ENCODE measurements at regions of chr12 and their contacts with region 1.

Region 1: DNA sequence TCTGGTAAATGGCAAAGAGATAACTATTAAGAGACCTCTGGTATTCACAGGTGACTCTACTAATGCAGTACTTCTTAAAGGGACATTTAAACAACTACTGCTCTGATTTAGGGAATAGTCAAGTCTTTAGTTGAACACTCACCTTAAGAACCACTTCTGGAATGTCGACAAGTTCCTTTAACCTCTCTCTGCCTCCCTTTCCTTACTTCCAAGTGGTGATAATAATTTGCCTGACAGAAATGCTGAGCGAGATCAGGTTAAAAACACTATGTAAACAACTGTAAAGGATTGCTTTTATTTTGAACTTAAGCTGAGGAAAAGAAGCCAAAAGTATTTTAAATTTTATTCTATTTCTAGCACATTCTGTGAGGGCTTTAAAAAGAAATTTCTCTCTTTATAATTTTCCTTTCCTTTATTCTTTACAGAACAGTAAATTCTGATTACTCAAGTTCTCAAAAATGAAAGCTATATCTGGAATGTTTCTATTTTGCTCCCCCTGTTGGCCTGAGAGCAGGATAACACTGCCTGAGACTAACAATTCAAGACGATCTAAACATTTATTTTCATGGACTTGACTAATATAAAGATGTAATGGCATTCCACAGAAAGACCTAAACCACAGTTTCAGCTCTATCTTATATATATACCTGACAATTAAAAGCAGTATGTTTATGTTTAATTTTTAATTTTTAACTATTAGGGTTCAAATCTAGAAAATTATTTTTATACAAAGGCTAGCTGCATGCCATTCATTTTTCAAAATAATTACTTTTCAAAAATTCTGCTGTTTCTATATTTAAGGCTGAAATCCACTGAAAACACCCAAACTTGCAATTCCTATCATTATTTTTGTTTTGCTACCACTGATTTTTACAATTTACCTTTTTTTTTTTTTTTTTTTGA is 29.2 kb downstream of the ZCCHC8 start:
- DNase-seq: peak; percentile 80
- H3K4me3 ChIP-seq: no peak overlapping the region
- H3K27ac ChIP-seq: peak overlapping the region; percentile 35
- H3K4me1 ChIP-seq: peaks cover 3% of the 10 kb centered on the region
- H3K27me3 ChIP-seq: no peaks in the 10 kb centered on the region
- CTCF ChIP-seq: peak; percentile 46 to 62
- POLR2A ChIP-seq: no peak

Region 2: DNA sequence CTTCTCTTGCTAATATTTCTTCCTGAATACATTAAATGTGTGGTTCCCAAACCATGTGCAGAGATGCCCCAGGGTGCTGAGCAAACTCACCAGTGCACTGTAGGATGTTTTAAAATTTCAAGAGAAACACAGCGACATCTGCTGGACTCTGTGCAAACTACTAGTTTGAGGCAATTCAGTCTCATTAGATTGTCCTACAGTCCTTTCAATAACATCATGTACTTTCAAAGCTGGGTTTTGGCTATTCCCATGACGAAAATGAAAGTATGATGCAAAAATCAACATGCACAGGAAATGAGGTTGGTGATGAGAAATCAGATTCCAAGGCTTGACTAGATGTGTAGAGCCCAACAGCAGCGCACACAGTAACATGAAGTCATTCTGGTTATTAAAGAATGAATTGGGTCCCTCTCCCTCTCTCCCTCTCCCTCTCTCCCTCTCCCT is 115.4 kb before region 1 on chr12:
- CTCF ChIA-PET with region 1: interaction called, 14 read pairs
- POLR2A ChIA-PET with region 1: no interaction called
- dilution Hi-C with region 1: no loop called
- intact Hi-C with region 1: no loop called
- DNase-seq: peak; percentile 69
- H3K4me3 ChIP-seq: no peak overlapping the region
- H3K27ac ChIP-seq: no peak overlapping the region
- H3K4me1 ChIP-seq: no peaks in the 10 kb centered on the region
- H3K27me3 ChIP-seq: no peaks in the 10 kb centered on the region
- CTCF ChIP-seq: peak; percentile 67 to 74
- POLR2A ChIP-seq: no peak

Region 3: DNA sequence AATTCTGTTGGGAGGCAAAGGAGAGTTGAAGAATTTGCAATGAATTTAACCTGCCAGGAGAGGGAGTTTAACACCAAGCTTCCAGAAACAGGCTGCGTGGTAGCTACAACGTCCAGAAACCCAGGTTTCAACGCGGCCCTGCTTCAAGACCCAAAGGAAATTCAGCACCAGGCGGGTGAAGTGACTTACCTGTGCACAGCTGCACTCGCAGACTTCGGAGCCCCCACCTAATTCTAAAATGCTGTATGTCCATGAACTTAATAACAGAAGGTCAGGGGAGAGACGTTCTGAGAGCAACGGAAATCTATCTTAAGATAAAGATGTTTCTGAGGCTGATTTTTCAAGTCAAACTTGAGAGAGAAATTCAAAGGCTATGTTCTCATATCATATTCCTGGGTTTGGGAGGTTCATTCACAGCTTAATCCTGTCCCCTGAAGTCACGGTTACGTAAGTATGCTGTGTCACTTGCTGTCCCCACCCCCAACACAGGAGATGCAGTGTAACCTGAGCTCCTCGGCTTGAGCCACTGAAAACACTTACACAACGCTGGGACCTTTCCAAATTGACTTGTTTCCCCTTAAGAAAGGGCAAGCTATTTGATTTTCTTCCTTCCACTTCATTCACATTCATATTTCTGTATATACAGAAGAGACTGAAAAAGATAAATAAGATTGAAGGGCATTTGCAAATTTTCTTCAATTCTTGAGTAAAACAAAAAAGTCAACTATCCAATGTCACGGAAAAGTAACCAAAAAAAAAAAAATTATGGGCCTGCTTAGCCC is 71.8 kb before region 1 on chr12:
- CTCF ChIA-PET with region 1: interaction called, 428 read pairs
- POLR2A ChIA-PET with region 1: interaction called, 18 read pairs
- dilution Hi-C with region 1: no loop called
- intact Hi-C with region 1: loop called (anchors 1 kb)
- DNase-seq: peak; percentile 82
- H3K4me3 ChIP-seq: peak overlapping the region in 1 of 3 experiments; percentile 20
- H3K27ac ChIP-seq: peak overlapping the region; percentile 94
- H3K4me1 ChIP-seq: peaks cover 21% of the 10 kb centered on the region
- H3K27me3 ChIP-seq: no peaks in the 10 kb centered on the region
- CTCF ChIP-seq: peak; percentile 62 to 67
- POLR2A ChIP-seq: peak; percentile 10

Region 4: GRCh38 chr12:122421821-122422729 is 49.5 kb before region 1 on chr12 and contains the start of gene CLIP1:
- CTCF ChIA-PET with region 1: interaction called, 36 read pairs
- POLR2A ChIA-PET with region 1: interaction called, 4 read pairs
- dilution Hi-C with region 1: no loop called
- intact Hi-C with region 1: loop called (anchors 1 kb)
- DNase-seq: peak; percentile 63
- H3K4me3 ChIP-seq: peak within 1 kb of the TSS; percentile 47 to 82 (median 82)
- H3K27ac ChIP-seq: peak within 1 kb of the TSS; percentile 81
- H3K4me1 ChIP-seq: peaks cover 49% of the 10 kb centered on the region
- H3K27me3 ChIP-seq: no peaks in the 10 kb centered on the region
- CTCF ChIP-seq: peak; percentile 9 to 54
- POLR2A ChIP-seq: peak; percentile 54
- total RNA-seq, gene CLIP1: 71.0 and 84.3 TPM in 2 replicates

Region 5: DNA sequence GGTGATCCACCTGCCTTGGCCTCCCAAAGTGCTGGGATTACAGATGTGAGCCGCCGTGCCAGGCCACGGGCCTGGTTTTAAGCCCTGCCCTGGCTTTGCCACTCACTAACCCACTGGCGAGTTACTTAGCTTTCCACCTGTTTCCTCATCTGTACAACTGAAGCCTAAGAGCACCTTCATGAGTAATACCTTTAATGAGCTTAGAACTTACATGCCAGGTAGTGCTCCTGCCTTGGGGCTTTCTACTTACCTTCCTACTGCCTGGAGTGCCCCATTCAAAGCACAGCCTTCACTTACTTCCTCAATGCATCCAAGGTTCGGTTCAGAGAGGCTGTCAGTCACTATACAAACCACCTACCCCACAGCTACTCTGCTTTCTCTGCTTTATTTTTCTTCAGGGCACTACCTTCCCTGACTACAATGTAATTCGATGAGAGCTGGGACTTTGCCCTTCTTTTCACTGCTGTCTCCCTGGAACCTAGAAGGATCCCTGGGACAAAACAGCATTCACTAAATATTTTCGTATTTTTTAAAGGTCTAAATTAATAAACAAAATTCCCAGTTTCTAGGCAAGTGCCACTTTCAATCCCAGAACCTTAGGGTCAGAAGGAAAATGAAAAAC is 15.3 kb after region 1 on chr12:
- CTCF ChIA-PET with region 1: interaction called, 16 read pairs
- POLR2A ChIA-PET with region 1: interaction called, 3 read pairs
- dilution Hi-C with region 1: no loop called
- intact Hi-C with region 1: no loop called
- DNase-seq: no peak
- H3K4me3 ChIP-seq: no peak overlapping the region
- H3K27ac ChIP-seq: no peak overlapping the region
- H3K4me1 ChIP-seq: no peaks in the 10 kb centered on the region
- H3K27me3 ChIP-seq: no peaks in the 10 kb centered on the region
- CTCF ChIP-seq: no peak
- POLR2A ChIP-seq: no peak